Activated B cell treated with CpG ODN at 0.5 μM for 24 hours (primary cell): ENCODE measurements at regions of chr7 and their contacts with region 1.

Region 1: DNA sequence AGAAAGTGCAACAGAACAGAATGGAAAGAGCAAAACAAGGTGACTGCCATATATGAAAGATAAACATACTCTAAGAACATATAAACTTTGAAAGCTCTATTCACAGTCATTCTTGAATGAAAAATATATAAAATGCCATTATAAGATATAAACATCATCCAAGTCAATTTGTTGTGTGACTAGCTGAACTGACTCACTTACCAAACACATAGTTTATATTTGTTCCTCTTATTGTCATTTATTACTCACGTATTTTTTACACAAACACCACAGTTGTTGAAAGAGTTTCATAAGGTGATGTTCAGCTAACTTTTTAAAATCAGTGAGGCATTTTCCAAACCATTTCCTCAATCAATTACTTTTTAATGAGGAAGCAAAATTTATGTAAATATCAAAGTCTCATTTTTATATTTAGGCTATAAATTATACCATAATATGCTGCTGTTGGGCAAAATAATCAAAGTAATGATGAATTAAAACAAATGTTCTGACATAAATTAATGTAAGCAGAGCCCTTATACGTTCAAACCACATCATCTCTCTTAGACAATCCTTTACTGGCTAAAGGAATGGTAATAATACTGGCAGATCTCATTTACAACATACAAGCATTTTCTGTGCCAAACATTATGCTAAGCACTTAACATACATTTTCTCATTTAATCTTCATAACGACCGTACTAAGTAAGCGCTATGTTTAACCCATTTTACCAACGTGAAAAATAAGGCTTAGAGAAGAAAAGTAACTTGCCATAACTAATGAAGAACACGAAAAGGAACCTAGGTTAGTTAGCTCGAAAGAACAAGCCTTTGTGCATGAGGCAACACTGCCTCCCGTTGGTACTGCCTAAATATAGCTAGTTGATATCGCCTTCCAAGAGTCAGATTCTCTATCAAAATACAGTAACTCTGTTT is 7.3 kb downstream of the LRRN3 start:
- DNase-seq: peak; percentile 19
- ATAC-seq: peak; percentile 86
- H3K4me3 Mint-ChIP-seq: no peak overlapping the region
- H3K27ac Mint-ChIP-seq: peak overlapping the region; percentile 18
- H3K4me1 Mint-ChIP-seq: peaks cover 17% of the 10 kb centered on the region
- H3K27me3 Mint-ChIP-seq: no peaks in the 10 kb centered on the region
- CTCF ChIP-seq: peak; percentile 64

Region 2: GRCh38 chr7:109844362-109844761 is 1253.9 kb before region 1 on chr7:
- CTCF ChIA-PET with region 1: interaction called, 7 read pairs
- POLR2A ChIA-PET with region 1: no interaction called
- intact Hi-C with region 1: loop called (anchors 1 kb)
- DNase-seq: no peak
- ATAC-seq: no peak
- H3K4me3 Mint-ChIP-seq: no peak overlapping the region
- H3K27ac Mint-ChIP-seq: no peak overlapping the region
- H3K4me1 Mint-ChIP-seq: no peaks in the 10 kb centered on the region
- H3K27me3 Mint-ChIP-seq: no peaks in the 10 kb centered on the region
- CTCF ChIP-seq: no peak

Region 3: DNA sequence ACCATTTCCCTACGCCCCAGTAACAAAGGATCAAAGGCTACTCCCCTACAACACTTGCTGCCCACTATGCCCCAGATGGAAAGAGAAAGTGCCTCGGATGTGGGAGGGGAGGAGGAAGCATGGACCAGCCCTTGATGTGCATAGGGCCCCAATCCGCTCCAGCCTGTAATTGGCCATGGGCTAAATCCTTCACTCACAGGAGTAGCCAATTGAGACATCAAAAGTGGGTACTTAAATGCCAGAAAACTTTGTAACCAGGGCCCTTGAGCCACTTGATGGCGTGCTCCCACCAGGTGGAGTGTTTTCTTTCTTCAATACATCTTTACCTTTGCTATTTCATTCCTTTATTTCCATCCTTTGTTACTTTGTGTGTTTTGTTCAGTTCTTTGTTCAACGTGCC is 507.9 kb before region 1 on chr7:
- CTCF ChIA-PET with region 1: no interaction called
- POLR2A ChIA-PET with region 1: no interaction called
- intact Hi-C with region 1: loop called (anchors 1 kb)
- DNase-seq: no peak
- ATAC-seq: no peak
- H3K4me3 Mint-ChIP-seq: no peak overlapping the region
- H3K27ac Mint-ChIP-seq: no peak overlapping the region
- H3K4me1 Mint-ChIP-seq: no peaks in the 10 kb centered on the region
- H3K27me3 Mint-ChIP-seq: no peaks in the 10 kb centered on the region
- CTCF ChIP-seq: no peak

Region 4: GRCh38 chr7:111919631-111920179 is 821.4 kb after region 1 on chr7:
- CTCF ChIA-PET with region 1: no interaction called
- POLR2A ChIA-PET with region 1: no interaction called
- intact Hi-C with region 1: no loop called
- DNase-seq: no peak
- ATAC-seq: no peak
- H3K4me3 Mint-ChIP-seq: no peak overlapping the region
- H3K27ac Mint-ChIP-seq: no peak overlapping the region
- H3K4me1 Mint-ChIP-seq: no peaks in the 10 kb centered on the region
- H3K27me3 Mint-ChIP-seq: no peaks in the 10 kb centered on the region
- CTCF ChIP-seq: no peak